ENCODE measurements at regions of chr7 and their contacts with region 1.

Region 1: DNA sequence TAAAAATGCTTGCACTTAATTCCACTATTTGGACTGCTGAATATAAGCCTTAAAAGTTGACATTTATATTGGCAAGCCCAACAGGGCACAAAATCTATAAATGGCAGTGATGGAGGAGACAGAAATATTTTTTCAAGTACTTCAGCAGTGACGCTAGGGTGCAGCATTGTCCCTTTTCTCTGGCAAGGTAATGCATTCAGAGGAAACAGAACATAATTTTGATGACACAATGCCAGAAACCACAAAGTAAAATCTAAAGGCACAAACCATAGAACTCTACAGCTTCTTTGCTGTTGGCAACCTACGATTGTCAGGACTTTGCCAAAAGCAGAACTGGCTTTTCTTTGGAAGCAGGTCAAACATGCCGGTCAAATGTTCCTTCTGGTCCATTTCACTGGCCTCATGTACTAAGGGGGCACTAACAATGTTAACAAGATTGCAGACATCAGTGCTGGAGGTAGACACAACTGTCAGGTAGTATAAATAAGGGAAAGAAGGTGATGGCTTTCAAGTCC is 30.9 kb upstream of the FAM133B start:
- DNase-seq: peak; percentile 53
- H3K4me3 ChIP-seq: peak overlapping the region in 1 of 2 experiments; percentile 20; a peak in 2 of 4 replicates
- H3K27ac ChIP-seq: peak overlapping the region; percentile 81 to 83
- H3K4me1 ChIP-seq: peaks cover 9 to 29% of the 10 kb centered on the region in 2 experiments
- H3K27me3 ChIP-seq: no peaks in the 10 kb centered on the region
- CTCF ChIP-seq: peak; percentile 97
- EP300 ChIP-seq: peak; percentile 55 to 69; a peak in 1 of 4 replicates
- RAD21 ChIP-seq: peak; percentile 99

Region 2: DNA sequence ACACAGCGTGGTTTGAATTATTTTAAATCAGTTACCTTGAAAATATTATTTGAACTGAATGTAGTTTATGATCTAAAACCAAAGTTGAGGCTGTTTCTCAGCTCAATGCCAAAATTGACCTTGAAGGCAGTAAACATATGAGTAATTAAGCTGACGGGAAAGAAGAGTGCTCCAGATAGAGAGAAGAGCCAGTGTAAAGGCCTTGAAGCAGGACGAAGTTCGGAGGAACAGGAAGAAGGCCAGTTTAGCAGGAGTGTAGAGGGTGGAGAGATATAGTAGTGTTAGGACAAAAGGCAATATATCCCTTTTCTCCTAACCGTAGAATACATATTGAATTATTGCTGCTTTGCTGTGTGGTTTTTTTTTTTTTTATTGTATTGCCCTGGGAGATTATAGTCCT is 550.1 kb before region 1 on chr7:
- CTCF ChIA-PET with region 1: no interaction called
- POLR2A ChIA-PET with region 1: no interaction called
- DNase-seq: no peak
- H3K4me3 ChIP-seq: no peak overlapping the region
- H3K27ac ChIP-seq: no peak overlapping the region
- H3K4me1 ChIP-seq: peaks cover 0 to under 1% of the 10 kb centered on the region in 2 experiments; a peak in 1 of 4 replicates
- H3K27me3 ChIP-seq: no peaks in the 10 kb centered on the region
- CTCF ChIP-seq: no peak
- EP300 ChIP-seq: no peak
- RAD21 ChIP-seq: no peak

Region 3: GRCh38 chr7:92134271-92135051 is 486.6 kb before region 1 on chr7 and contains the start of gene CYP51A1:
- CTCF ChIA-PET with region 1: no interaction called
- POLR2A ChIA-PET with region 1: no interaction called
- DNase-seq: peak; percentile 99
- H3K4me3 ChIP-seq: peak within 1 kb of the TSS; percentile 82 to 99
- H3K27ac ChIP-seq: peak within 1 kb of the TSS; percentile 95 to 98
- H3K4me1 ChIP-seq: peaks cover 0 to 16% of the 10 kb centered on the region in 2 experiments; a peak in 3 of 4 replicates
- H3K27me3 ChIP-seq: no peaks in the 10 kb centered on the region
- CTCF ChIP-seq: no peak
- EP300 ChIP-seq: peak in 1 of 2 experiments; percentile 30; a peak in 2 of 4 replicates
- RAD21 ChIP-seq: no peak
- polyA plus RNA-seq, gene CYP51A1: 4.3 and 4.7 TPM in 2 replicates

Region 4: GRCh38 chr7:92598310-92598981 is 22.6 kb before region 1 on chr7:
- CTCF ChIA-PET with region 1: interaction called, 126 read pairs
- POLR2A ChIA-PET with region 1: no interaction called
- DNase-seq: no peak
- H3K4me3 ChIP-seq: no peak overlapping the region
- H3K27ac ChIP-seq: no peak overlapping the region
- H3K4me1 ChIP-seq: peaks cover 0 to 8% of the 10 kb centered on the region in 2 experiments; a peak in 1 of 4 replicates
- H3K27me3 ChIP-seq: no peaks in the 10 kb centered on the region
- CTCF ChIP-seq: no peak
- EP300 ChIP-seq: no peak
- RAD21 ChIP-seq: no peak

Region 5: GRCh38 chr7:92633211-92633906 is 12.3 kb after region 1 on chr7:
- CTCF ChIA-PET with region 1: interaction called, 24 read pairs
- POLR2A ChIA-PET with region 1: no interaction called
- DNase-seq: no peak
- H3K4me3 ChIP-seq: peak overlapping the region; percentile 18 to 45; a peak in 3 of 4 replicates
- H3K27ac ChIP-seq: peak overlapping the region; percentile 93 to 98
- H3K4me1 ChIP-seq: peaks cover 39 to 47% of the 10 kb centered on the region in 2 experiments
- H3K27me3 ChIP-seq: no peaks in the 10 kb centered on the region
- CTCF ChIP-seq: no peak
- EP300 ChIP-seq: peak; percentile 83 to 98
- RAD21 ChIP-seq: no peak

Region 6: GRCh38 chr7:92691578-92691977 is 70.5 kb after region 1 on chr7:
- CTCF ChIA-PET with region 1: interaction called, 28 read pairs
- POLR2A ChIA-PET with region 1: no interaction called
- DNase-seq: peak; percentile 43
- H3K4me3 ChIP-seq: no peak overlapping the region
- H3K27ac ChIP-seq: peak overlapping the region in 1 of 2 experiments; percentile 58; a peak in 2 of 4 replicates
- H3K4me1 ChIP-seq: peaks cover 12 to 18% of the 10 kb centered on the region in 2 experiments
- H3K27me3 ChIP-seq: no peaks in the 10 kb centered on the region
- CTCF ChIP-seq: peak; percentile 82
- EP300 ChIP-seq: no peak
- RAD21 ChIP-seq: peak; percentile 87

Region 7: GRCh38 chr7:92768501-92769393 is 147.7 kb after region 1 on chr7:
- CTCF ChIA-PET with region 1: interaction called, 21 read pairs
- POLR2A ChIA-PET with region 1: no interaction called
- DNase-seq: peak; percentile 60
- H3K4me3 ChIP-seq: no peak overlapping the region
- H3K27ac ChIP-seq: peak overlapping the region; percentile 95 to 99
- H3K4me1 ChIP-seq: peaks cover 54 to 77% of the 10 kb centered on the region in 2 experiments
- H3K27me3 ChIP-seq: no peaks in the 10 kb centered on the region
- CTCF ChIP-seq: no peak
- EP300 ChIP-seq: peak; percentile 82 to 98; a peak in 3 of 4 replicates
- RAD21 ChIP-seq: no peak; the same call in 1 of the 2 replicates

Region 8: DNA sequence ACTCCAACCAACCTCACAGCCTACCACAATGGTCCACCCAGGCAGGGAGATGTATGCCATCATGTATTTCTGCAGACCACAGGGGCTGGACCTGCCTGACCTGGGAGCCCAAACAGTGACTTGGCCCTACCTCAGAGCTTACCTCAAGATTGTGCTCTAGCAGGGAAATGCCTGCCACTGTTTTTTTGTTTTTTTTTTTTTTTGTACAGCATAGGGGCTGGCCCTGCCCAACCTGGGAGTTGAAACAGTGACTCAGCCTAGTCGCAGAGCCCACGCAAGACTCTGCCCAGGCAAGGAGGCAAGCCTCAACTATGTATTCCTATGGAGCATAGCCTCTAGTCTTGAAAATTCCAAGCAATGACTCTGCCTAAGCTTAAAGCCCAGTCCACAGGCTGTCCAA is 254.6 kb after region 1 on chr7:
- CTCF ChIA-PET with region 1: interaction called, 14 read pairs
- POLR2A ChIA-PET with region 1: no interaction called
- DNase-seq: no peak
- H3K4me3 ChIP-seq: no peak overlapping the region
- H3K27ac ChIP-seq: no peak overlapping the region
- H3K4me1 ChIP-seq: peaks cover 0 to 5% of the 10 kb centered on the region in 2 experiments; a peak in 2 of 4 replicates
- H3K27me3 ChIP-seq: no peaks in the 10 kb centered on the region
- CTCF ChIP-seq: no peak
- EP300 ChIP-seq: no peak
- RAD21 ChIP-seq: no peak